Calu3 (cell line): ENCODE measurements at regions of chrX and their contacts with region 1.

Region 1: DNA sequence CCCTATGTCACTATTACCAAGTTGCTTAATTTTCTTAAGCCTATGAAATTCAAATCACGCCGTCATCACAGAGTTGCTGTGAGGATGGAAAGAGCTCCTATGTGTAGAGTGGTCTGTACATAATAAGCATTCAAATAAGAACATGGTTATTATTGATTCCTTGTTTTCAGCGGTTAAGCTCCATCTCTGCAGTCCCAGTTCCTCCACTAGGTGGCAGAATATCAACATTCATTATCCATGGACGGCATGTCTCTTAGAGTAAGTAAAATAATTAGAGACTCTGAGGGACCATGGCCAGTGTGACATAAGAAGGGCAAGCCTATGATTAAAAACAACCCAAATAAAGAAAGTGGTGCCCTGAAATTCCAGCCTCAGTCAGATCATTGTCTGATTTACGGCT is 132.5 kb upstream of the NHS start:
- DNase-seq: peak; percentile 62
- H3K4me3 Mint-ChIP-seq: no peak overlapping the region
- H3K27ac Mint-ChIP-seq: no peak overlapping the region
- H3K4me1 Mint-ChIP-seq: no peaks in the 10 kb centered on the region
- H3K27me3 Mint-ChIP-seq: peaks cover 15% of the 10 kb centered on the region
- CTCF ChIP-seq: peak; percentile 41

Region 2: GRCh38 chrX:17120816-17121215 is 121.7 kb before region 1 on chrX:
- CTCF ChIA-PET with region 1: no interaction called
- intact Hi-C with region 1: no loop called
- DNase-seq: no peak
- H3K4me3 Mint-ChIP-seq: no peak overlapping the region
- H3K27ac Mint-ChIP-seq: no peak overlapping the region
- H3K4me1 Mint-ChIP-seq: no peaks in the 10 kb centered on the region
- H3K27me3 Mint-ChIP-seq: no peaks in the 10 kb centered on the region
- CTCF ChIP-seq: no peak

Region 3: DNA sequence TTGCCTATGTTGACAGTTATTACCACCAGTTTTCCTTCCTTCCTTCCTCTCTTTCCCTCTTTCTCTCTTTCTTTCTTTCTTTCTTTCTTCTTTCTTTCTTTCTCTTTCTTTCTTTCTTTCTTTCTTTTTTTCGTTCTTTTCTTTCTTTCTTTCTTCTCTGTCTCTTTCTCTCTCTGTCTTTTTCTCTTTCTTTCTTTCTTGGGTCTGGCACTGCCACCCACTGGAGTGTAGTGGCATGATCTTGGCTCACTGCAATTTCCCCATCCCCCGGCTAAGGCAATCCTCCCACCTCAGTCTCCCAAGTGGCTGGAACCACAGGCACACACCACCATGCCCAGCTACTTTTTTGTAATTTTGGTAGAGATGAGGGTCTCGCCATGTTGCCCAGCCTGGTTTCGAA is 80.9 kb after region 1 on chrX:
- CTCF ChIA-PET with region 1: no interaction called
- intact Hi-C with region 1: loop called (anchors 2 kb)
- DNase-seq: no peak
- H3K4me3 Mint-ChIP-seq: no peak overlapping the region
- H3K27ac Mint-ChIP-seq: no peak overlapping the region
- H3K4me1 Mint-ChIP-seq: no peaks in the 10 kb centered on the region
- H3K27me3 Mint-ChIP-seq: no peaks in the 10 kb centered on the region
- CTCF ChIP-seq: no peak

Region 4: DNA sequence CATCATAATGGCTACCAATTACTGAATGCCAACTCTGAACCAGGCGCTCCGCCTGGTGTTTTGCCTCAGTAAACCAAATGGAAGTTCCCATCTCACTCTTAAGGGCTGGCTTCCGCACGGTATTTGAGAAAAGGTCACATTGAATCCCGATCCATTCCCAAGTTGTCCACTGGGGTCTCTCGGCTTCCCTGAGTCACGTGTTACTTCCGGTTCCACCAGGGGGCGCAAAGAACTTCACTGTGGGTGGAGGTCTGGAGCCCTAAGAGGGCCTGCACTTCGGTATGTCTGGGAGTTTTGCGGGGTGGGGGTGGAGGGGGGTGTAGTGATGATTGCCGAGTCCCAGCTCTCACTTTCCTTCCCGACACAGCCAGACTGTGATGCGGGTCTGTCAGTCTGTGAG is 119.2 kb after region 1 on chrX:
- CTCF ChIA-PET with region 1: no interaction called
- intact Hi-C with region 1: no loop called
- DNase-seq: peak; percentile 16
- H3K4me3 Mint-ChIP-seq: no peak overlapping the region
- H3K27ac Mint-ChIP-seq: no peak overlapping the region
- H3K4me1 Mint-ChIP-seq: peaks cover 14% of the 10 kb centered on the region
- H3K27me3 Mint-ChIP-seq: no peaks in the 10 kb centered on the region
- CTCF ChIP-seq: peak; percentile 34

Region 5: DNA sequence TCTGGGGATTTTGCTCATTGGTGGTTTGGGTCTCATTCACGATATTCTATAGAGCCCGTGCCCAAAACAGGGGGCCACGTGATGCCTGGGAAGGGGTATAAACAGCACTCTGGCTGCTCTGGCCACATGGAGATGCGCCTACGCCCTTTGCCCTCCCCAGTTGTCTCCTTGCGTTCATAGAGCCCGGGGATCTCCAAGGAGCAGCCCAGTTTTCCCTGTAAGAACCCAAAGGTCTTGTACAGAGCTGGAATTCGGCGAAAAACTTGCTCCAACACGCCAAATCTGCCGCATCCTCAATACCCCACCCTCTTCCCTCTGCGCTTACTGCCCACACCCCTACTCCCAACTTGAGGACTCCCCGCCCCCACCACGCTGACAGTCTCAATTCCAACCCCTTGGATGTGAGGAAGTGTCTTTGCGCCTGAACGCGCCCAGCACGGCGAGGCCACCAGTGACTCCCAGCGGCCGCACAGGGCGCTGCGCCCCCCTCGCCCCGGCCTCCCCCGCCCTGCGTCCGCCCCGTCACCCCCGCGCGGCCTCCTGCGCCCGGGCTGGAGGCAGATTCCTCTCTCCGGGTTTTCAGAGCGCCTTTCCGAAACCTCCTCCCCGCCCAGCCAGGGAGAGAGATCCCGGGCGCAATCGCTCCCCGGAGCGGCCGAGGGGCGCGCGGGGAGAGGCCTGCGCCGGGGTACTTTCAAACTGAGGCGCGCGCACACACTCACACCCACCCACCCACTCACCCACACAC is 132.3 kb after region 1 on chrX and contains the start of gene NHS:
- CTCF ChIA-PET with region 1: interaction called, 3 read pairs
- intact Hi-C with region 1: loop called (anchors 1 kb)
- DNase-seq: peak; percentile 84
- H3K4me3 Mint-ChIP-seq: peak within 1 kb of the TSS; percentile 87
- H3K27ac Mint-ChIP-seq: peak within 1 kb of the TSS; percentile 60
- H3K4me1 Mint-ChIP-seq: peaks cover 21% of the 10 kb centered on the region
- H3K27me3 Mint-ChIP-seq: no peaks in the 10 kb centered on the region
- CTCF ChIP-seq: peak; percentile 64
- total RNA-seq, gene NHS: 14.7 and 19.5 TPM in 2 replicates

Region 6: DNA sequence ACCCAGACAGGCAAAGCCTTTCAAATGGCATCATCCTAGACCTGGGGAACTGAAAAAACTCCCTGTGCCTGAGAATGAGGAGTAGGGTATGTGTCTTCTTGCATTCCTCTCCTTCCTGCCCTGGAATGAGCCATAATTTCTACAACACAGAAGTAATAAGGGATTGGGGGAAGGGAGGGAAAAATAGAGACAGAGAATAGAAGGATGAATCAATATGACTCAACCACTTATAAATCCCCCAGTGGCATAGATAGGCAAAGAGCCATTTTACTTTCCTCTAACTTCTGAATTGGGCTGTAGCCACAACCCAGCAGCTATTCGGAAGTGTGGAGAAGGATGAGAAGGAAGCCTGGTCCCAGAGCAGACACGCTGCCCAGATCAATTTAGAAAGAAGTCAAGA is 232.4 kb after region 1 on chrX:
- CTCF ChIA-PET with region 1: no interaction called
- intact Hi-C with region 1: no loop called
- DNase-seq: no peak
- H3K4me3 Mint-ChIP-seq: no peak overlapping the region
- H3K27ac Mint-ChIP-seq: no peak overlapping the region
- H3K4me1 Mint-ChIP-seq: peaks cover 16% of the 10 kb centered on the region
- H3K27me3 Mint-ChIP-seq: no peaks in the 10 kb centered on the region
- CTCF ChIP-seq: no peak

Region 7: DNA sequence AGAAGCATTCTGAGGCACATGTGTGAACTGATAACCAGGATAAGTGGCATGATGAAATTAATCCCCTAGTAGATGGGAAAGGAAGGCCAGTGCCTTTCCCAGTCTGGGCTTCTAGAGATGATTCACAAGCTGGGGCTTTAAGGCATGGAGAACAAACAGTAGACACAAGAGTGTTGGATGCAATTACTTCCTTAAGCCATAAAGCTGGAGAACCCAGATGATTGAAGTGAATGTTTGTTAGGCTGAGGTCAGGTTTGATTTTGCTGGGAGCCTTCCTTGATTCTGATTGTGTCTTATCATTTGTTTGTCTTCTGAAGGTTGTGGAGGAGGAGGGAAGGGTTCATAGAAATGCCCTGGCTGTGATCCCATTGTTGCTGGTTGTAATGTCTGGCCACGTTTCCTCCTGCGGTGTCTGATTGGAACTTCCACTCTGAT is 257.7 kb after region 1 on chrX:
- CTCF ChIA-PET with region 1: no interaction called
- intact Hi-C with region 1: loop called (anchors 10 kb)
- DNase-seq: peak; percentile 9
- H3K4me3 Mint-ChIP-seq: no peak overlapping the region
- H3K27ac Mint-ChIP-seq: peak overlapping the region; percentile 52
- H3K4me1 Mint-ChIP-seq: peaks cover 42% of the 10 kb centered on the region
- H3K27me3 Mint-ChIP-seq: no peaks in the 10 kb centered on the region
- CTCF ChIP-seq: no peak

Region 8: DNA sequence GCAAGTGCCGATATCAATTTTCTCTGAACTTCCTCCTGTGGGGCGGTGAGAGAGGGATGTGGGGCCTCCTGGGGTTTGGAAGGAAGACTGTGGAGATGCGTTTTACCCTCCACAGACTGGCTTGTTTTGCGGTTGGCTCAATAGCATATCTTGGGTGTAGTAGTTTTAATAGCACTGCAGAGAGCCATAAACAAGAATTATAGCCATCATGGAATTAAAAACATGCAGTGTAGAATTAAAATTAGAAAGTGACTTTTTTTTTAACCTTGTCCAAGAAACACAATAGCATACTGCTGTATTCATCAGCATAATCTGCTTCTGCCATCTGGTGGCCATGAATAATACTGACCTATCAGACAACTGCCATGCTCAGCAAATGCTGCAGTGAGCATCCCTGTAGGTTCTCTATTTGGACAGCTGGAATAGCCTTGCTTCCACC is 447.5 kb after region 1 on chrX:
- CTCF ChIA-PET with region 1: interaction called, 3 read pairs
- intact Hi-C with region 1: loop called (anchors 1 kb)
- DNase-seq: peak; percentile 66
- H3K4me3 Mint-ChIP-seq: no peak overlapping the region
- H3K27ac Mint-ChIP-seq: peak overlapping the region; percentile 71
- H3K4me1 Mint-ChIP-seq: peaks cover 19% of the 10 kb centered on the region
- H3K27me3 Mint-ChIP-seq: no peaks in the 10 kb centered on the region
- CTCF ChIP-seq: peak; percentile 54